CD4-positive, alpha-beta T cell (primary cell): ENCODE measurements at regions of chr3 and their contacts with region 1.

Region 1: GRCh38 chr3:136075218-136075808 is 109.8 kb downstream of the PPP2R3A start:
- DNase-seq: peak; percentile 56 to 87 (median 68)
- ATAC-seq: peak; percentile 61
- H3K4me3 ChIP-seq: no peak overlapping the region
- H3K4me3 Mint-ChIP-seq: no peak overlapping the region
- H3K27ac ChIP-seq: no peak overlapping the region
- H3K27ac Mint-ChIP-seq: no peak overlapping the region
- H3K4me1 ChIP-seq: no peaks in the 10 kb centered on the region
- H3K4me1 Mint-ChIP-seq: no peaks in the 10 kb centered on the region
- H3K27me3 ChIP-seq: no peaks in the 10 kb centered on the region
- H3K27me3 Mint-ChIP-seq: no peaks in the 10 kb centered on the region
- CTCF ChIP-seq: peak; percentile 98

Region 2: DNA sequence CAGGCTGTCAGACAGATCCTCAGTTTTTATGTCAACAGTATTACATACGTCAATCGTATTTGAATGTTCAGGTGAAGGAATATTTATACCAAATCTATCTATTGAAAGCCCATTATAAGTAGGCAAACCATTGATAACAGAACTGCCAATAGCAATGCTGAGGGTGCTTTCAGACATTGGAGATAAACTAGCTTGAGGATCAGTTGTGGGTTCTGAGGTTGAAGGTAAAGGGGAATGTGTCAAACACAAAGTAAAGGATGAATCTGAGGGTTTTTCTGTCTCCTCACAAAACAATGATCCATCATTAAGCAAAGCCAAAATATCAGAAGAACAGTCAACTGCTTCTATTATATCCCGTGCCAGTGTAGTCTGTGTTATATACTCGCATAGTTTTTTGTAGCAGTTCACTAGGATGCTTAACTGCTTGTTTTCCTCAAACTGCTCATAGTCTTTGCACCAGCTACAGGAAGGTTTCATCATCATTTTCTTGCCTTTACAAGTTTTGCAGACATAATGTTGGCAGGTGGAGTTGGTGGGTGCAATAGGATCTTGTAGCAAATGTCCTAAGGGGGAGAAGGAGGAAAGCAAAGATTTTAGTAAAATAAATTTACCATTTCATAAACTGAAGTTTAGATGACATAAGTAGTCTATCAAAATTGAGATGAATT is 77.0 kb after region 1 on chr3:
- CTCF ChIA-PET with region 1: no interaction called
- POLR2A ChIA-PET with region 1: no interaction called
- intact Hi-C with region 1: no loop called
- DNase-seq: no peak
- ATAC-seq: no peak
- H3K4me3 ChIP-seq: no peak overlapping the region
- H3K4me3 Mint-ChIP-seq: no peak overlapping the region
- H3K27ac ChIP-seq: no peak overlapping the region
- H3K27ac Mint-ChIP-seq: peak overlapping the region; percentile 35
- H3K4me1 ChIP-seq: peaks cover 19% of the 10 kb centered on the region
- H3K4me1 Mint-ChIP-seq: peaks cover 75% of the 10 kb centered on the region
- H3K27me3 ChIP-seq: no peaks in the 10 kb centered on the region
- H3K27me3 Mint-ChIP-seq: no peaks in the 10 kb centered on the region
- CTCF ChIP-seq: no peak

Region 3: GRCh38 chr3:136196401-136197158 is 121.3 kb after region 1 on chr3:
- CTCF ChIA-PET with region 1: interaction called, 5 read pairs
- POLR2A ChIA-PET with region 1: interaction called, 5 read pairs
- intact Hi-C with region 1: loop called in 1 of 2 experiments (anchors 5 kb)
- DNase-seq: peak; percentile 95 to 100 (median 98)
- ATAC-seq: peak; percentile 62
- H3K4me3 ChIP-seq: peak overlapping the region; percentile 95
- H3K4me3 Mint-ChIP-seq: peak overlapping the region; percentile 98
- H3K27ac ChIP-seq: peak overlapping the region; percentile 91 to 99
- H3K27ac Mint-ChIP-seq: peak overlapping the region; percentile 98
- H3K4me1 ChIP-seq: peaks cover 16% of the 10 kb centered on the region
- H3K4me1 Mint-ChIP-seq: peaks cover 36% of the 10 kb centered on the region
- H3K27me3 ChIP-seq: no peaks in the 10 kb centered on the region
- H3K27me3 Mint-ChIP-seq: peaks cover 5% of the 10 kb centered on the region
- CTCF ChIP-seq: no peak

Region 4: GRCh38 chr3:136250226-136250902 is 175.1 kb after region 1 on chr3 and contains the start of gene PCCB:
- CTCF ChIA-PET with region 1: interaction called, 3 read pairs
- POLR2A ChIA-PET with region 1: no interaction called
- intact Hi-C with region 1: loop called (anchors 2 to 5 kb)
- DNase-seq: peak; percentile 85 to 96 (median 90)
- ATAC-seq: peak; percentile 95
- H3K4me3 ChIP-seq: peak within 1 kb of the TSS; percentile 63
- H3K4me3 Mint-ChIP-seq: peak within 1 kb of the TSS; percentile 91
- H3K27ac ChIP-seq: peak within 1 kb of the TSS; percentile 72 to 78
- H3K27ac Mint-ChIP-seq: peak within 1 kb of the TSS; percentile 85
- H3K4me1 ChIP-seq: peaks cover 23% of the 10 kb centered on the region
- H3K4me1 Mint-ChIP-seq: peaks cover 23% of the 10 kb centered on the region
- H3K27me3 ChIP-seq: no peaks in the 10 kb centered on the region
- H3K27me3 Mint-ChIP-seq: no peaks in the 10 kb centered on the region
- CTCF ChIP-seq: peak; percentile 89
- total RNA-seq, gene PCCB: 8.3 to 10.2 TPM

Region 5: DNA sequence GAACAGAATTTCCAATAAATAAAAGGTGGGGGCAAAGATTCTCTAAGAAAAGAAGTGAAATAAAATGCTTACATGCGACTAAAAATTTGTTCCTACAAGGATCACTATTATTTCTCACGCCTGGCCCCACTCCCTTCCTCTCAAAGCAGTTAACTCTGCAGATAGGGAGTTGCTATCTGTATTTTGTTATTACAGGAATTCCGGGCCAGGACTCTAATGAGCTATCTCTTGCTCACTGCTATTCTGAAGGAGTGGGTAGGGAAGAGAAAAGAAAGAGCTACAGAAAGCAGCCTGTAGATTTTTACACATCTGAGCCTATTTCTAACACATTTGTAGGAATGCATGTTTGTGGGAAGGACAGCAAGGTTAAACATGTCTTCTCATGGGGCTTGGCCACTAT is 315.3 kb after region 1 on chr3:
- CTCF ChIA-PET with region 1: interaction called, 7 read pairs
- POLR2A ChIA-PET with region 1: interaction called, 3 read pairs
- intact Hi-C with region 1: loop called (anchors 2 kb)
- DNase-seq: no peak
- ATAC-seq: no peak
- H3K4me3 ChIP-seq: no peak overlapping the region
- H3K4me3 Mint-ChIP-seq: no peak overlapping the region
- H3K27ac ChIP-seq: no peak overlapping the region
- H3K27ac Mint-ChIP-seq: no peak overlapping the region
- H3K4me1 ChIP-seq: peaks cover 3% of the 10 kb centered on the region
- H3K4me1 Mint-ChIP-seq: no peaks in the 10 kb centered on the region
- H3K27me3 ChIP-seq: no peaks in the 10 kb centered on the region
- H3K27me3 Mint-ChIP-seq: no peaks in the 10 kb centered on the region
- CTCF ChIP-seq: no peak

Region 6: GRCh38 chr3:137013955-137014688 is 938.8 kb after region 1 on chr3:
- CTCF ChIA-PET with region 1: interaction called, 30 read pairs
- POLR2A ChIA-PET with region 1: interaction called, 4 read pairs
- intact Hi-C with region 1: loop called (anchors 1 kb)
- DNase-seq: peak; percentile 67 to 91 (median 82)
- ATAC-seq: peak; percentile 89
- H3K4me3 ChIP-seq: peak overlapping the region; percentile 42
- H3K4me3 Mint-ChIP-seq: peak overlapping the region; percentile 67
- H3K27ac ChIP-seq: no peak overlapping the region
- H3K27ac Mint-ChIP-seq: no peak overlapping the region
- H3K4me1 ChIP-seq: peaks cover 9% of the 10 kb centered on the region
- H3K4me1 Mint-ChIP-seq: peaks cover 9% of the 10 kb centered on the region
- H3K27me3 ChIP-seq: no peaks in the 10 kb centered on the region
- H3K27me3 Mint-ChIP-seq: no peaks in the 10 kb centered on the region
- CTCF ChIP-seq: peak; percentile 87

Region 7: DNA sequence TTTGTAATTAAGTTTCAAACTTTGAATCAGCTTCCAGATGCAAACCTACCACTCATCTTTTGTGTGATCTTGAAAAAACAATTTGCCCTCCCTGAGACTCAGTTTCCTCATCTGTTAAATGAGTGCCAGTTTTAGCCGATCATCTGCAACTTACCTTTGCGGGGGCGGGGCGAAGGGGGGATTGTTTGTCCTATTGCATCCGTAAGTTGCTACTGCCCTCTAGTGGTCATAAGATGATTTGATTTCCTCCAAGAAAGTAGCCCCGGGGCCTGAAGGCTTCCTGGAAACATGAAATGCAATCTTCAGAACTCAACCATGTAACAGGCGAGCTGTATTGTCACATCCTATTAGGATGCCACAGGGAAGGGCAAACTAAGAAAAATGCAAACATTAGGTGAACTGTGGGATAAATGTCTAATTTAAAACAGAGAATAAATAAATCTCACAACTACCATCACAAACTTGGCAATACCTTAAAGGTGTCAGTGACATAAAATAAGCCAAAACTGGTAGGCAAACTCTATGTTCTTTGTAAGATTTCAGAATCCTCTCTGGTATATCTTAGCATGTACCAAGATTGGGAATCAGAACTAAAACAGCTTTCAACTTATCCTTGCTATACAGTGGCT is 1871.1 kb after region 1 on chr3:
- CTCF ChIA-PET with region 1: no interaction called
- POLR2A ChIA-PET with region 1: no interaction called
- intact Hi-C with region 1: loop called (anchors 2 to 5 kb)
- DNase-seq: peak; percentile 4 to 70 (median 22)
- ATAC-seq: peak; percentile 49
- H3K4me3 ChIP-seq: no peak overlapping the region
- H3K4me3 Mint-ChIP-seq: no peak overlapping the region
- H3K27ac ChIP-seq: no peak overlapping the region
- H3K27ac Mint-ChIP-seq: no peak overlapping the region
- H3K4me1 ChIP-seq: peaks cover 3% of the 10 kb centered on the region
- H3K4me1 Mint-ChIP-seq: no peaks in the 10 kb centered on the region
- H3K27me3 ChIP-seq: no peaks in the 10 kb centered on the region
- H3K27me3 Mint-ChIP-seq: no peaks in the 10 kb centered on the region
- CTCF ChIP-seq: peak; percentile 75

Region 8: DNA sequence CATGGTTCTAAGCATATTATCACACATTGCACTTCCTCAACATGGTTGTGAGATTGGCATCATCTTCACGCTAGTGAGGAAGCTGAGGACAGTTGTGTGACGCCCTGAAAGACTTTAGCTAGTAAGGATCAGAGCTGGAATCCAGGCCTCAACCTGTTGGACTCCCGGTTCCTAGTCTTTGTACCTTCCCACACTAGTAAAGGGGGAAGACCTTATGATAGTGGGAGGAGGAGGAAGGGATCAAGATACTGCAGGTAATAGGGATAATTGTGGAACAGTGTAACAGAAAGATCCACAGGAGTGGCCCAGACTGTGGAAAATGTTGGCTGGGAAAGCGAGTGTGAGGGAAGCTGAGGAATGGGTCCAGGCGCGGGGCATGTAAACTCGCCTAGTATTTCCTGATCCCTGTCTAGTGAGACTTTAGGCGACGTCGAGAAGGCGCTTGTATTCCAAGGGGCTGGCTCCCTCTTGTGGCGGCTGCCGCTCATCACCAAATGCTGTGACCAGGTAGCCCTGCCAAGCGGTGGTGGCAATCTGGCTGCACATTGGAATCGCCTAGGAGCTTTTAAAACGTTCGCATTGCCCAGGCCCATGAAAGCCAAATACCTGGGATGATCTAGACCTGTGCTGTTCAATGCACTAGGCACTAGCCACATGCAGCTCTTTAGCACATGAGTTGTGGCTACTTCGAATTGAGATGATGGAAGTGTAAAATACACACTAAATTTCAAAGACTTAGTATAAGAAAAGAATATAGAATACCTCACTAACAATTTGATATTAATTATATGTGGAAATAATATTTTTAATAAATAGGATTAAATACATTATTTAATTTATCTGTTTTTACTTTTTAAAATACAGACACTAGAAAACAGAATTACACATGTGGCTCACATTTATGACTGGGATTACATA is 1895.9 kb after region 1 on chr3:
- CTCF ChIA-PET with region 1: no interaction called
- POLR2A ChIA-PET with region 1: no interaction called
- intact Hi-C with region 1: loop called in 1 of 2 experiments (anchors 10 kb)
- DNase-seq: peak in 13 of 14 experiments; percentile 14 to 55 (median 29)
- ATAC-seq: no peak
- H3K4me3 ChIP-seq: no peak overlapping the region
- H3K4me3 Mint-ChIP-seq: no peak overlapping the region
- H3K27ac ChIP-seq: no peak overlapping the region
- H3K27ac Mint-ChIP-seq: no peak overlapping the region
- H3K4me1 ChIP-seq: no peaks in the 10 kb centered on the region
- H3K4me1 Mint-ChIP-seq: no peaks in the 10 kb centered on the region
- H3K27me3 ChIP-seq: peaks cover 0 to 10% of the 10 kb centered on the region in 2 experiments
- H3K27me3 Mint-ChIP-seq: peaks cover 15% of the 10 kb centered on the region
- CTCF ChIP-seq: peak; percentile 65